ENCODE measurements at regions of chr11 and their contacts with region 1.

Region 1: DNA sequence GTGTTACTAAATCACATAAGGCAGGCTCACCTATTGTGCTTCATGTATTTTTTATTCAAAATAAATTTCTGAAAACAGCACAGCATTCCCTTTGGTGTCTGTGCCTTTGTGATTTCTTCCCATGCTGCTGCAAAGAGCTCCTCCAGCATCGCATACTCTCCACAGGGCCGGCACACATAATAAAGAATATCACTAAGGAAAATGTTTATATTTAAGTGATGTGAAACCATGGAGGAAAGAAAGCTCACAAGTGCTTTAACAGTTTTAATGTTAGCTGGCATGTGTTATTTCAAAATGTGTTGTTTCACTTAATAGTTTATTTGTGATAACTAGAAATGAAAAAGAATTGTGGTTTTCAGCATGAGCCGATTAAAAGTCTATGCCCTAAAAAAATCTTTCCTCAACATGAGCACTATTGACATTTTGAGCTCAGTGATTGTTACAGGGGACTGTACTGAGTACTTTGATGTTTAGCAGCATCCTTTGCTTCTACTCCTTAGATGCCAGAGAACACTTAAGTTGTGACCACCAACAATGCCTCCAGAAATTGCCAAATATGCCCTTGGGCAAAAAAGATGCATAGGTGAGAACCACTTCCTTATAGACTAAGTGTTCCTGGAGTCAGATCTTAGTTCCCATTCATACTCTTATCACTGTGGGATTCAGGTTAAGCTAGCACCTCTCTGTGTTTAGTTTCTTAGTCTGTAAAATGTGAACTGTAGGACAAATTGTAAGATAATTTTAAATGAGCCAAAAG is 241.1 kb upstream of the ANO3 start:
- DNase-seq: no peak
- H3K4me3 ChIP-seq: no peak overlapping the region
- H3K27ac ChIP-seq: no peak overlapping the region
- H3K4me1 ChIP-seq: no peaks in the 10 kb centered on the region
- H3K27me3 ChIP-seq: no peaks in the 10 kb centered on the region
- CTCF ChIP-seq: no peak
- POLR2A ChIP-seq: no peak

Region 2: DNA sequence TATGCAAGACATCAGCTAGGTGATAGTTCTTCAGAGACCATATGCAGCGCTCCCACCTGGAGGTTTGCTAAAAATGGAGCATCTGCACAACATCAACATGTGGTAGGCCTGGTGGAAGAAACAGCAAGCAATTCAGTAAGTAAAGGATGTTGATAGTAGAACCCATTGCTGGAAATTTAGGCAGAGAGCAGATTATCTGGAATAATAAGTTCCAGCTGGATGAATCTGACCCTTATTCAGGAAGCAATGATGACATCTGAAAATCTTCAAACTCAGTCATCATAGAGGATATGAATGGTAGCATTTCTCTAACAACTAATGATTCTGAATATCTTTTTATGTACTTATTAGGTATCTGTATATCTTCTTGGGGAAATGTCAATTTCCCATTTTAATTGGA is 15.9 kb after region 1 on chr11:
- intact Hi-C with region 1: no loop called
- DNase-seq: no peak
- H3K4me3 ChIP-seq: no peak overlapping the region
- H3K27ac ChIP-seq: no peak overlapping the region
- H3K4me1 ChIP-seq: no peaks in the 10 kb centered on the region
- H3K27me3 ChIP-seq: no peaks in the 10 kb centered on the region
- CTCF ChIP-seq: no peak
- POLR2A ChIP-seq: no peak

Region 3: DNA sequence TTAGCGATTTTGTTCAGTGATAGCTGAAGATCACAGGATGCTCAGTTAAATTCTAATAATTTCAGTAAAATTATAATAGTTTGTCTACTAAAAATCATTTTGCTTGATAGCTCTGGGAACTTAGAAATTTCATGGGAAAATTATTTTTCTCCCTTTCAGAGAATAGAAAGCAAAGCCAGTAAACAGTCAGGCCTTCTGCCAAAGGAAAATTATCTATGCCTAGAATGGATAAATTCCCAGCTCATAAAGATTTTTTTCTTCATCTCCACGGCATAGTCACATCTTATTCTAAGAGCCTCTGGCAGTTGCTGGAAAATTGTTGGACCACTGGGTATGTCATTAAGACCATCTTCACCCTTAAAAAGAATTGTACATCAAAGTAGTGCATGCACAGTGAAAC is 71.5 kb after region 1 on chr11:
- intact Hi-C with region 1: loop called (anchors 2 kb)
- DNase-seq: no peak
- H3K4me3 ChIP-seq: no peak overlapping the region
- H3K27ac ChIP-seq: no peak overlapping the region
- H3K4me1 ChIP-seq: no peaks in the 10 kb centered on the region
- H3K27me3 ChIP-seq: no peaks in the 10 kb centered on the region
- CTCF ChIP-seq: no peak
- POLR2A ChIP-seq: no peak

Measured in vagina (tissue), 2 donors.